BJ (cell line): ENCODE measurements at regions of chr5 and their contacts with region 1.

Region 1: GRCh38 chr5:157743163-157744050 is at the start of gene LSM11:
- DNase-seq: peak; percentile 27
- H3K4me3 ChIP-seq: peak within 1 kb of the TSS; percentile 70
- H3K27me3 ChIP-seq: no peaks in the 10 kb centered on the region
- CTCF ChIP-seq: peak; percentile 81
- polyA plus RNA-seq, gene LSM11: 2.4 and 3.2 TPM in 2 replicates

Region 2: GRCh38 chr5:157335534-157336422 is 407.6 kb before region 1 on chr5:
- CTCF ChIA-PET with region 1: interaction called, 16 read pairs
- POLR2A ChIA-PET with region 1: no interaction called
- DNase-seq: peak; percentile 75
- H3K4me3 ChIP-seq: no peak overlapping the region
- H3K27me3 ChIP-seq: no peaks in the 10 kb centered on the region
- CTCF ChIP-seq: no peak

Region 3: GRCh38 chr5:157555037-157555640 is 188.3 kb before region 1 on chr5:
- CTCF ChIA-PET with region 1: no interaction called
- POLR2A ChIA-PET with region 1: no interaction called
- DNase-seq: no peak
- H3K4me3 ChIP-seq: no peak overlapping the region
- H3K27me3 ChIP-seq: no peaks in the 10 kb centered on the region
- CTCF ChIP-seq: no peak

Region 4: GRCh38 chr5:157582731-157583620 is 160.4 kb before region 1 on chr5:
- CTCF ChIA-PET with region 1: no interaction called
- POLR2A ChIA-PET with region 1: no interaction called
- DNase-seq: no peak
- H3K4me3 ChIP-seq: no peak overlapping the region
- H3K27me3 ChIP-seq: no peaks in the 10 kb centered on the region
- CTCF ChIP-seq: no peak

Region 5: DNA sequence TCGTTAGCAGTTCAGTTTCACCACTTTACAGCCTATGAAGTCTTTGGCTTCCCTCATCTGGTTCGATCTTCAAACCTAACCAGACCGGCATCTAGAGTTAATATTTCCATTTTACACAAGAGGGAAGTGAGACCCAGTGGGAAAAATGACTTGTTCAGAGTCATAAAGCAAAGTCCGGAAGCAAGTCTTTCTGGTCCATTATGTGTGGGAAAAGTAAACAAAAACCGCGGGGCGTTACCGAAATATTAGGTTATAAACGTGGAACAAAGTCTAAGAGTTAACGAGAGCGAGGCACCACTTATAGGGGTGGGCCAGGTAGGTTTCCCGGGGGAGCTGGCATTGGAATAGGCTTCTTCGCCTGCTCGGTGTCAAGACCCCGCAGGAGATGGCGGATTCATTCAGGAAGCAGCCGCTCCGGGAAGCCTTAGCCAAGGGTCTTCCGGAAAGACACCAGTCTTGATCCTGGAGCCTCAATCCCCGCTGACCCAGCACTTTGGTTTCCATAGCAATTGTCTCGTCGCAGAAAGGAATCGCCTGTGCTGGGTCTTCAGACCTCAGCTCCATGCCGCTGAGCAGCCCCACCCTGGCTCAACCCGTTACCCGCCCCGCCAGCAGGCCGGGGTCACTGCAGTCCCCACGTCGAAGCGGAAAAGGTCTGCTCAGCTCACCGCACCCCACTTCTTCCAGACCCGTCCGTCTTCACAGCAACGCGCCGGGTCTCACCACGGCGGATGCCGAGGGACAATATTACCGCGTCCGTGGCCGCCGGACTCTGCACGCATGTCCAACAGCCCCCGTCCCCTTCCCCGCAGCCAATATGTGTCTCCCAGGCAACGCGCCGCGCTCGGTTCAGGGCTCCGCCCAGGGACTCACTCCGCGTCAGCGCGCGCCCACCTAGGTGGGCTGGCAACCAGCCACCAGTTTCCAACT is 72.5 kb before region 1 on chr5 and contains the start of gene C5orf52:
- CTCF ChIA-PET with region 1: interaction called, 17 read pairs
- POLR2A ChIA-PET with region 1: no interaction called
- DNase-seq: no peak
- H3K4me3 ChIP-seq: peak within 1 kb of the TSS; percentile 70
- H3K27me3 ChIP-seq: no peaks in the 10 kb centered on the region; the same call in none of the 2 replicates
- CTCF ChIP-seq: no peak
- polyA plus RNA-seq, gene C5orf52: not detected in 2 replicates

Region 6: GRCh38 chr5:157731272-157732129 is 11.9 kb before region 1 on chr5 and contains the start of gene THG1L:
- CTCF ChIA-PET with region 1: interaction called, 42 read pairs
- POLR2A ChIA-PET with region 1: no interaction called
- DNase-seq: peak; percentile 93
- H3K4me3 ChIP-seq: peak within 1 kb of the TSS; percentile 61
- H3K27me3 ChIP-seq: no peaks in the 10 kb centered on the region
- CTCF ChIP-seq: no peak
- polyA plus RNA-seq, gene THG1L: 22.7 and 29.5 TPM in 2 replicates

Region 7: DNA sequence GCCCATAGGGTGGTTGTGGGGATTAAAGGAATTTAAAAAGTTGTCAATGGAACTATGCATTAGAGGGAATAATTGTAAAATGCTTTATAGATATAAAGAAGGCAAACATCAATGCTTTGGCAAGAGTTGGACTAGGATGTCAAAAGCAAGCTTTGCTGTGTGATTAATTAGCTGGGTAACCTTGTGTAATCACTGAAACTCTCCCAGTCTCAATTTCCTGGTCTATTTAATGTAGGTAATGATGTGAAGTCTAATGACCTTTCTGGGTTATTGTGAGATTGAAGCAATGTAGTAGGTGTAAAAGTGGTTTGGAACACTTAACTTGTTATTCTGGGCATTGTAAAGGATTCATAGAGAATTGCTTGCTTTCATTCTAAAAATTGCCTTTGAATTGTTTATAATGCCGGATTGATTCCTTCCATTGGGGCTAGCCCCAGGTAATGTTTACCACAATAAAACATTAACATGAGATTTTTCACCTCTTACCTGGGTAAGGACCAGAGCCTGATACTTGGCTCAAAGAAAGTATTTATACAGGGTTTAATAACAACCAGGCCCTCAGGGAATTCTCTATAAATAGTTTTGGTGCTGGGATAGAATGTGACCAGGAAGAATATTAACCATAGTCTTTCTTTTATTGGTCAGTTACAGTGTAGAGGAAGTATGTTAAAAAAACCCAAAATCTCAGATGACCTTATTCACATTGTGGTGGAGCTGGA is 145.6 kb after region 1 on chr5:
- CTCF ChIA-PET with region 1: no interaction called
- POLR2A ChIA-PET with region 1: no interaction called
- DNase-seq: no peak
- H3K4me3 ChIP-seq: no peak overlapping the region
- H3K27me3 ChIP-seq: no peaks in the 10 kb centered on the region
- CTCF ChIP-seq: no peak